Naive thymus-derived CD4-positive, alpha-beta T cell (primary cell): ENCODE measurements at regions of chr16 and their contacts with region 1.

Region 1: GRCh38 chr16:19886073-19886941 is 1.7 kb upstream of the GPRC5B start:
- DNase-seq: peak; percentile 66 to 85 (median 78)
- ATAC-seq: peak; percentile 78
- H3K4me3 ChIP-seq: peak overlapping the region; percentile 70
- H3K4me3 Mint-ChIP-seq: peak overlapping the region; percentile 84 to 96 (median 90)
- H3K27ac ChIP-seq: no peak overlapping the region
- H3K27ac Mint-ChIP-seq: peak overlapping the region in 6 of 9 donors; percentile 17 to 72 (median 52)
- H3K4me1 ChIP-seq: peaks cover 9 to 23% of the 10 kb centered on the region in 2 donors
- H3K4me1 Mint-ChIP-seq: peaks cover 12 to 26% (median 22%) of the 10 kb centered on the region in 7 donors
- H3K27me3 ChIP-seq: peaks cover 0 to 12% of the 10 kb centered on the region in 2 donors
- H3K27me3 Mint-ChIP-seq: peaks cover 4 to 39% (median 13%) of the 10 kb centered on the region in 5 donors

Region 2: DNA sequence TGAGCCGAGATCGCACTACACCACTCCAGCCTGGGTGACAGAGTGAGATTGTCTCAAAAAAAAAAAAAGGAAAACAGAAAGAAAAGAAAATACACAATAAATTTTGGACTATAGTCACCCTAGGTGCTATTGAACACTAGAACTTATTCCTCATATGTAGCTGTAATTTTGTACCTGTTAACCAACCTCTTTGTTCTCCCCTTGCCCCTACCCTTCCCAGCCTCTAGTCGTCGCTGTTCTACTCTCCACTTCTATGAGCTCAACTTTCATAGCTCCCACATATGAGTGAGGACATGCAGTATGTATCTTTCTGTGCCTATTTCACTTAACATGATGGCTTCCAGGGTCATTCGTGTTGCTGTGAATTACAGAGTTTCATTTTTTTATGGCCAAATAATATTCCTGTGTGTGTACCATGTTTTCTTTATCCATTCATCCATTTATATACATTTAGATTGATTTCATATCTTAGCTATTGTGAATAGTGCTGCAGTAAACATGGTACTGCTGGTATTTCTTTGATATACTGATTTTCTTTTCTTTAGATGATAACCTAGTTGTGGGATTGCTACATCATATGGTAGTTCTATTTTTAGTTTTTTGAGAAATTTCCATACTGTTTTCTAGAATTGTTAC is 302.5 kb before region 1 on chr16:
- CTCF ChIA-PET with region 1: interaction called, 5 read pairs
- POLR2A ChIA-PET with region 1: no interaction called
- intact Hi-C with region 1: loop called (anchors 1 kb)
- DNase-seq: peak in 5 of 9 donors; percentile 25 to 47 (median 31)
- ATAC-seq: peak; percentile 81
- H3K4me3 ChIP-seq: no peak overlapping the region
- H3K4me3 Mint-ChIP-seq: no peak overlapping the region
- H3K27ac ChIP-seq: no peak overlapping the region
- H3K27ac Mint-ChIP-seq: no peak overlapping the region
- H3K4me1 ChIP-seq: no peaks in the 10 kb centered on the region
- H3K4me1 Mint-ChIP-seq: no peaks in the 10 kb centered on the region
- H3K27me3 ChIP-seq: no peaks in the 10 kb centered on the region
- H3K27me3 Mint-ChIP-seq: no peaks in the 10 kb centered on the region

Region 3: GRCh38 chr16:19601083-19601976 is 285.0 kb before region 1 on chr16:
- CTCF ChIA-PET with region 1: interaction called, 49 read pairs
- POLR2A ChIA-PET with region 1: no interaction called
- intact Hi-C with region 1: loop called (anchors 1 kb)
- DNase-seq: peak in 7 of 9 donors; percentile 20 to 60 (median 50)
- ATAC-seq: peak; percentile 38
- H3K4me3 ChIP-seq: no peak overlapping the region
- H3K4me3 Mint-ChIP-seq: no peak overlapping the region
- H3K27ac ChIP-seq: no peak overlapping the region
- H3K27ac Mint-ChIP-seq: peak overlapping the region in 3 of 9 donors; percentile 3 to 56 (median 29)
- H3K4me1 ChIP-seq: no peaks in the 10 kb centered on the region
- H3K4me1 Mint-ChIP-seq: peaks cover 0 to 5% (median 0%) of the 10 kb centered on the region in 7 donors
- H3K27me3 ChIP-seq: no peaks in the 10 kb centered on the region
- H3K27me3 Mint-ChIP-seq: no peaks in the 10 kb centered on the region

Region 4: GRCh38 chr16:19632916-19633315 is 253.4 kb before region 1 on chr16:
- CTCF ChIA-PET with region 1: no interaction called
- POLR2A ChIA-PET with region 1: no interaction called
- intact Hi-C with region 1: loop called in 1 of 2 experiments (anchors 1 kb)
- DNase-seq: no peak
- ATAC-seq: no peak
- H3K4me3 ChIP-seq: no peak overlapping the region
- H3K4me3 Mint-ChIP-seq: no peak overlapping the region
- H3K27ac ChIP-seq: no peak overlapping the region
- H3K27ac Mint-ChIP-seq: peak overlapping the region in 2 of 9 donors; percentile 15 to 45
- H3K4me1 ChIP-seq: no peaks in the 10 kb centered on the region
- H3K4me1 Mint-ChIP-seq: no peaks in the 10 kb centered on the region
- H3K27me3 ChIP-seq: no peaks in the 10 kb centered on the region
- H3K27me3 Mint-ChIP-seq: no peaks in the 10 kb centered on the region

Region 5: DNA sequence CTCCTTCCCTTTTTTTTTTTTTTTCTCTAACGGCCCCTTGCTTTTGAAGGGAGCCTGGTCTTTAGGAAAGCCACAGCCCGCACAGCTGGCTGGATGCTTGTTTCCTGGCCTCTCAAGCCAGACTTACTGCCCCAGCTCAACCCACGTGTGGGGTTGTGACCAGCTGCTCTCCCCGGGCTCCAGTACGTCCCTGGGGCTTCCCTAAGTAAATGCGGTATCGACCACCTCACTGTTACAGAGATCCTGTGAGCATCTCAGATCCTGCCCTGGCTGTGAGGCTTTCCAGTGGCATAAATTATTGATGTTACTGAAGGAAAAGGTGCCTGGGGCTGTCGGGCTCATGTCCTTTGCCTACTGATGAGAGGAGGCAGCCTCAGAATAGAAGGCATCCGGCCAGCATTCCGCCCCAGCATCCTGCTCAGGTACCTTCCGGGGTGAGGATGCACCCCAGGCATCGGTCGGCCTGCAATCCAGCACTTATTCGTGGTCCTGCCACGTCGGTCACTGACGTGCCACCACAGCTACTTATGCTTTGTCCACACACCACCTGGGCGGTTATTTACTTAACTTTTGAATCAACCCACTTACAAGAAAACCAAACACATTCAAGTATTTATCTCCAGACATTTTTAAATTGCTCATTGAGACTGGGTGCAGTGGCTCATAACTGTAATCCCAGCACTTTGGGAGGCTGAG is 11.3 kb before region 1 on chr16:
- CTCF ChIA-PET with region 1: no interaction called
- POLR2A ChIA-PET with region 1: no interaction called
- intact Hi-C with region 1: no loop called
- DNase-seq: no peak
- ATAC-seq: no peak
- H3K4me3 ChIP-seq: no peak overlapping the region
- H3K4me3 Mint-ChIP-seq: no peak overlapping the region
- H3K27ac ChIP-seq: no peak overlapping the region
- H3K27ac Mint-ChIP-seq: peak overlapping the region in 2 of 9 donors; percentile 5 to 33
- H3K4me1 ChIP-seq: no peaks in the 10 kb centered on the region
- H3K4me1 Mint-ChIP-seq: peaks cover 0 to 11% (median 4%) of the 10 kb centered on the region in 7 donors
- H3K27me3 ChIP-seq: no peaks in the 10 kb centered on the region
- H3K27me3 Mint-ChIP-seq: peaks cover 0 to 4% (median 0%) of the 10 kb centered on the region in 5 donors

Region 6: DNA sequence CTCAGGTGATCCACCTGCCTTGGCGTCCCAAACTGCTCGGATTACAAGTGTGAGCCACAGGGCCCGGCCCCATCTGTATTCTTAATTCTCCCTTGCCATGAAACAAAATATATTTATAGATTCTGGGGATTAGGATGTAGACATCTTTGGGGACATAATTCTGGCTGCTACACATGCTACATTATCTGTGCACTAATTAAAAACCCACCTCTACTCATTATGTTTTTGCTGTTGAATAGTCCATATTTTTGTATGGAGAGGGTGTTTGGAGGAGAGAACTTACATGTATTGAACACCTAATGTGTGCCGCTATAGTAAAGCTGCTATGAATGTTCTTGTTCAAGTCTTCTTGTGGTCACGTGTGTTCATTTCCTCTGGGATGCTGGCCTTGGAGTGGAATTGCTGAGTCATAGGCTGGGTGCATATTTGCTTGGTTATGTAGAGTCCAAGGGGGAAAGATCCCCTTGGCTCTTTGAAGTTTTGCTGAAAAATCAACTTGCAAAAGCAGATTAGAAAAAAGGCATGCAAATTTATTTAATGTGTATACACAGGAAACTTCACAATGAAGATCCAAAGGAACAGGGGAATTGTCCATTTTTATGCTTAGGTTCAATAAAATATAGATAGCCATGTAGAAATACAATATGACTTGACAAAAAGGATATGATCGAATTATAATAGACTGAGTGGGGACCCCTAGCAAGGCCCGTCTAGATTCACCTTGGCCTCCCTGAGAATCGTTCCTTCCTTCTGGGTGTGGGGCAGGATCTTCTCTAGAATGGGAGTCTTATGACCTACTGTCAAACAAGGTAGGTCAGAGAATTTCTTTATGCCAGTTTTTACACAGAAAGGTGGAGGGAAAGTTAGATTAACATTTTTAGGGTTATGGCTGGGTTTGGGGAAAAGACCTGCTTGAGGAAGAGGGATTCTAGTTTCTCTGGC is 40.4 kb after region 1 on chr16:
- CTCF ChIA-PET with region 1: no interaction called
- POLR2A ChIA-PET with region 1: no interaction called
- intact Hi-C with region 1: no loop called
- DNase-seq: no peak
- ATAC-seq: no peak
- H3K4me3 ChIP-seq: no peak overlapping the region
- H3K4me3 Mint-ChIP-seq: no peak overlapping the region
- H3K27ac ChIP-seq: no peak overlapping the region
- H3K27ac Mint-ChIP-seq: no peak overlapping the region
- H3K4me1 ChIP-seq: no peaks in the 10 kb centered on the region
- H3K4me1 Mint-ChIP-seq: peaks cover 0 to 3% (median 0%) of the 10 kb centered on the region in 7 donors
- H3K27me3 ChIP-seq: no peaks in the 10 kb centered on the region
- H3K27me3 Mint-ChIP-seq: peaks cover 0 to 18% (median 15%) of the 10 kb centered on the region in 5 donors